ENCODE measurements at regions of chr3 and their contacts with region 1.

Region 1: GRCh38 chr3:195522254-195523023 is 20.7 kb downstream of the PPP1R2 start:
- DNase-seq: peak in 2 of 5 donors; percentile 29 to 51
- H3K4me3 ChIP-seq: no peak overlapping the region
- H3K27ac ChIP-seq: no peak overlapping the region
- H3K4me1 ChIP-seq: no peaks in the 10 kb centered on the region
- H3K27me3 ChIP-seq: no peaks in the 10 kb centered on the region
- CTCF ChIP-seq: peak; percentile 64

Region 2: GRCh38 chr3:195080571-195081151 is 441.8 kb before region 1 on chr3:
- intact Hi-C with region 1: no loop called
- DNase-seq: peak; percentile 83 to 92 (median 87)
- H3K4me3 ChIP-seq: no peak overlapping the region
- H3K27ac ChIP-seq: peak overlapping the region; percentile 63 to 88
- H3K4me1 ChIP-seq: peaks cover 0 to 21% (median 20%) of the 10 kb centered on the region in 3 donors
- H3K27me3 ChIP-seq: no peaks in the 10 kb centered on the region
- CTCF ChIP-seq: no peak

Region 3: GRCh38 chr3:195259475-195260279 is 262.8 kb before region 1 on chr3:
- intact Hi-C with region 1: loop called (anchors 10 kb)
- DNase-seq: peak; percentile 94 to 97 (median 96)
- H3K4me3 ChIP-seq: peak overlapping the region; percentile 26 to 57 (median 28)
- H3K27ac ChIP-seq: peak overlapping the region; percentile 78 to 88
- H3K4me1 ChIP-seq: peaks cover 0 to 12% (median 12%) of the 10 kb centered on the region in 3 donors
- H3K27me3 ChIP-seq: no peaks in the 10 kb centered on the region
- CTCF ChIP-seq: peak; percentile 79

Region 4: DNA sequence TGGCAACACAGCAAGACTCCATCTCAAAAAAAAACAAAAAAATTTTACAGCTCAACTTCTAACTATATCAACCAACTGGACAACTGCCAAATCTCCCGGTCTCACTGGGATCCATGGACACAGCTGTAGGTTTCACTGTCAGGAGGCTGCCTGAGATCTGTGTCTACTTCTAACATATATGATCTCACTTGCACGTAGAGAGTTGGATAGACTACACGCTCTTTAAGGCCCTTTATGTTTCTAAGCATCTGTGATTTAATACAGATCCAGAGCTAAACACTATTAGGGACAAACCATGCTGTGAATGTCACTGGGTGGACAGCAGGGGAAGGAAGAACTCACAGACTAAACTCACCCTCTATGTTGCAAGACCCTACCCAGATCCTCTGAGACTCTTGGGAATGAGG is 74.3 kb after region 1 on chr3:
- intact Hi-C with region 1: no loop called
- DNase-seq: peak in 1 of 5 donors; percentile 70
- H3K4me3 ChIP-seq: no peak overlapping the region
- H3K27ac ChIP-seq: no peak overlapping the region
- H3K4me1 ChIP-seq: no peaks in the 10 kb centered on the region
- H3K27me3 ChIP-seq: no peaks in the 10 kb centered on the region
- CTCF ChIP-seq: no peak

Measured in kidney (tissue), 22 donors.